Mammary epithelial cell (primary cell): ENCODE measurements at regions of chr5 and their contacts with region 1.

Region 1: DNA sequence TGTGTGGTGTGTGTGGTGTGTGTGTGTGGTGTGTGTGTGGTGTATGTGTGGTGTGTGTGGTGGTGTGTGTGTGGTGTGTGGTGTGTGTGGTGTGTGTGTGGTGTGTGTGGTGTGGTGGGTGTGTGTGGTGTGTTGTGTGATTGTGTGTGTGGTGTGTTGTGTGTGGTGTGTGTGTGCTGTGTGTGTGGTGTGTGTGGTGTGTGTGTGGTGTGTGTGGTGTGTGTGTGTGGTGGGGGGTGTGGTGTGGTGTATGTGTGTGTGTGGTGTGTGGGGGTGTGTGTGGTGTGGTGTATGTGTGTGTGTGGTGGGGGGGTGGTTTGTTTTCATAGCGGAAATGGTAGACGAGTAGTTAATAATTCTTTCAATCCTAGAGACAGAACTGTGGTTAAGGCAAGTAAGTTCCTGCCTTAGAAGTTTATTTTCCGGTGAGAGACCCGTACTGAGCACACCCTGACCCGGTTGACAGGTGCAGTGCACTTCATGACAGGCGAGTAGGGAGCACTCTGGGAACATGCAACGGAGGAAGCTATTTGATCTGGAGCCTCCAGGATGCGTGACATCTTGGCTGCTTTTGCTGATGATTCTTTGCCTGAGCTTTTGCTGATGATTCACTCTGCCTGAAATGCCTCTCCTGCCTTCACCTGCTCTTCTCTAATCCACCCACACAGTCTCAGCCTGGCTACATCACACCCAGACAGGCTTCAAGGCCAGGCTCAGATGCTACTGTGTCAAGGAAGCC is 21.7 kb upstream of the FAT2 start:
- DNase-seq: peak; percentile 100
- H3K4me3 ChIP-seq: no peak overlapping the region
- H3K27ac ChIP-seq: peak overlapping the region; percentile 97
- H3K4me1 ChIP-seq: peaks cover 62% of the 10 kb centered on the region
- H3K27me3 ChIP-seq: no peaks in the 10 kb centered on the region
- CTCF ChIP-seq: no peak

Region 2: DNA sequence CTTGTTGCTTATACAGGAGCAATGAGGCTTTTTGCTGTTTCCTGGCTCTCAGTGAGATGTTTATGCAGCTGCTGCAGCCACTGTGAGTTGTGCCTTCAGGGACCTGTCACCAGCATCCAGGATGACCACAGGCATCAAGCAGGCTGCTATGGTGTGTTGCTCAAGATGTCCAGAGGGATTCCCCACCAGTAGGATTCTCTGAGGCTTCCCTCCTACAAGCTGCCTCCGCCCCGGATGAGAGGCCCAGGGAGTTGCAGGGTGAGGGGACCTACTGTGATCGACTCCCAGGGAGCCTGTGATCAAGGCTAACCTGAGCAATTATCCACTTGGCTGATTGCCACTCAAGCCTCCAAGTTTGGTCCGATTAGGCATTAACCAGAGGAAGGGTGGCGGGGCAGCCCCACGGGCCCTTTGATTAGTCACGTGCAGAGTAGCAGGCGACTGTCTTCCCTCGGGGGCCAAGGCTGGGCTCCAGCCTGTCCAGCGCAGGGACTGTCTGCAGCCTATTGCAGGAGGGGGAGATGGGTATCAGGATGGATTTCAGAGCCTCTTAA is 19.9 kb before region 1 on chr5:
- CTCF ChIA-PET with region 1: no interaction called
- dilution Hi-C with region 1: no loop called
- in situ Hi-C with region 1: no loop called
- intact Hi-C with region 1: loop called (anchors 1 kb)
- DNase-seq: no peak
- H3K4me3 ChIP-seq: no peak overlapping the region
- H3K27ac ChIP-seq: no peak overlapping the region
- H3K4me1 ChIP-seq: peaks cover 62% of the 10 kb centered on the region
- H3K27me3 ChIP-seq: no peaks in the 10 kb centered on the region
- CTCF ChIP-seq: no peak

Region 3: GRCh38 chr5:151628112-151628823 is 15.4 kb after region 1 on chr5:
- CTCF ChIA-PET with region 1: no interaction called
- dilution Hi-C with region 1: no loop called
- in situ Hi-C with region 1: no loop called
- intact Hi-C with region 1: loop called (anchors 2 kb)
- DNase-seq: peak; percentile 86
- H3K4me3 ChIP-seq: no peak overlapping the region
- H3K27ac ChIP-seq: peak overlapping the region; percentile 69
- H3K4me1 ChIP-seq: peaks cover 66% of the 10 kb centered on the region
- H3K27me3 ChIP-seq: no peaks in the 10 kb centered on the region
- CTCF ChIP-seq: peak; percentile 18 to 30

Region 4: DNA sequence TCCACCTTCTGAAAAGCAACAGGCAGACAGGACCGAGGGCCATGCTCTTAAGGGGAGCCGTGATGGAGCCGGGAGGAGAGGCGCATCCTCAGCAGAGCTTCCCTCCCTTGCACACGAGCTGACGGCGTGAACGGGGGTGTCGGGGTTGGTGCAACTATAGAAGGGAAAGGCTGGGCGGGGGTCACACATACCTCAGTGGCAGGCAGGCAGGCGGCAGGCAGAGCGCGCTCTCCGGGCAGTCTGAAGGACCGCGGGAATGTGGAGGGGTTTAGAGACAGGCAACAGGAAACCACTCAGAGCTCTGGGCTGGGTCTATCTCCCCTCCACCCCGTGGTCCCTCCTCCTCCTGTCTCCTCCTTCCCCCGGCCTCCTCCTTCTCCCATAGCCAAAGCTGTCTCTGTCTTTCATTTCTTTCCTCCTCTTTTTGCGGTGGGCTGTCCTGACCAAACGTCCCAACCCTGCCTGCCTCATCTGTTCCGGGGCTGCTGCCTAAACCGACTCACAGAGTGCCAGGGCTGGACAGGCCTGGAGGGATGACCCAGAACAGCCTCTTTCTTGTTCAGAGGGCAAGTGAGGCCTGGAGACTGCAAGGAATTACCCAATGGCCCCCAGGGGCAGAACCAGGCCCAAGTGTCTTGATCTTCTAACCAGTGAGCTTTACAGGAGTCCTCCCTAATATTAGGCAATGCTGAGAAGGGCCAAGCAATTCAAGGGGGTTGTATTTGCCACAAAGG is 74.0 kb after region 1 on chr5 and contains the start of gene SPARC:
- CTCF ChIA-PET with region 1: interaction called, 15 read pairs
- dilution Hi-C with region 1: no loop called
- in situ Hi-C with region 1: no loop called
- intact Hi-C with region 1: no loop called
- DNase-seq: peak; percentile 80
- H3K4me3 ChIP-seq: peak within 1 kb of the TSS; percentile 60 to 70 (median 62)
- H3K27ac ChIP-seq: peak within 1 kb of the TSS; percentile 81
- H3K4me1 ChIP-seq: peaks cover 42% of the 10 kb centered on the region
- H3K27me3 ChIP-seq: no peaks in the 10 kb centered on the region
- CTCF ChIP-seq: no peak
- total RNA-seq, gene SPARC: 222 to 382 TPM